ENCODE measurements at regions of chr17 and their contacts with region 1.

Region 1: GRCh38 chr17:17859909-17860765 is 23.4 kb upstream of the SREBF1 start:
- DNase-seq: peak; percentile 75
- ATAC-seq: peak; percentile 93
- H3K4me3 Mint-ChIP-seq: no peak overlapping the region
- H3K27ac Mint-ChIP-seq: no peak overlapping the region
- H3K4me1 Mint-ChIP-seq: peaks cover 11% of the 10 kb centered on the region
- H3K27me3 Mint-ChIP-seq: no peaks in the 10 kb centered on the region
- CTCF ChIP-seq: peak; percentile 94

Region 2: DNA sequence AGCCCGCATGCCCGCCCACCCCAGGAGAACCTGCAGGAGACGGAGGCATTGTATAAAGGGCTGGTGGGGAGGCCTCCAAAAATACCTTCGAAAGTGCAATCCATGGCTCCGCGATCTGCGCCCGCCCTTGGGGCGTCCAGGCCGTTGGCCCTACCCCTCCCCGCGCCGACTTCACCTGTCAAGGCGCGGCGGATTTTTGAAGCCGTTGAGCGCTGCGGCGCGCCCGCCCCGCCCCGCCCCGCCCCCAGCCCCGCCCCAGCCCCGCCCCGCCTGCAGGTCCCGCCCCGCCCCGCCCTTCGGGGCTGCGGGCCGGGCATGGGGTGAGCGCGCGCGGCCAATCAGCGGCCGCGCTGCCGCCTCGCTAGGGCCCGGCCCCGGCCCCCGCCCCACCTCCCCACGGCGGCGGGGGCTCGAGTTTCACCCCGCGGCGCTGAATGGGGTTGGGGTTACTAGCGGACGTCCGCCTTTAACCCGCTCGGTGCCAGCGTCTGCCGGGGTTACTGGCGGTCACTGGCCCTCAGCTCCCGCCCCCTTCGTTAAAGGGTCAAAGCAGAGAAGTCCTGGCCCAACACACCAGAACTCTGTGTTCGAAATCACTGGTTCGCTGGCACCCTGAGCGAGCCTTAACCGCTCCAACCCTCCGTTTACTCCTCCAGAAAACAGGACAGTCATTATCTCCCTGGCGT is 36.6 kb before region 1 on chr17:
- CTCF ChIA-PET with region 1: interaction called, 12 read pairs
- POLR2A ChIA-PET with region 1: interaction called, 3 read pairs
- DNase-seq: peak; percentile 96
- ATAC-seq: peak; percentile 87
- H3K4me3 Mint-ChIP-seq: peak overlapping the region; percentile 52
- H3K27ac Mint-ChIP-seq: peak overlapping the region; percentile 99
- H3K4me1 Mint-ChIP-seq: peaks cover 77% of the 10 kb centered on the region
- H3K27me3 Mint-ChIP-seq: no peaks in the 10 kb centered on the region
- CTCF ChIP-seq: no peak

Region 3: GRCh38 chr17:17836250-17836817 is 23.8 kb before region 1 on chr17:
- CTCF ChIA-PET with region 1: interaction called, 37 read pairs
- POLR2A ChIA-PET with region 1: interaction called, 16 read pairs
- DNase-seq: peak; percentile 98
- ATAC-seq: peak; percentile 53
- H3K4me3 Mint-ChIP-seq: peak overlapping the region; percentile 69
- H3K27ac Mint-ChIP-seq: peak overlapping the region; percentile 94
- H3K4me1 Mint-ChIP-seq: peaks cover 70% of the 10 kb centered on the region
- H3K27me3 Mint-ChIP-seq: no peaks in the 10 kb centered on the region
- CTCF ChIP-seq: no peak

Region 4: DNA sequence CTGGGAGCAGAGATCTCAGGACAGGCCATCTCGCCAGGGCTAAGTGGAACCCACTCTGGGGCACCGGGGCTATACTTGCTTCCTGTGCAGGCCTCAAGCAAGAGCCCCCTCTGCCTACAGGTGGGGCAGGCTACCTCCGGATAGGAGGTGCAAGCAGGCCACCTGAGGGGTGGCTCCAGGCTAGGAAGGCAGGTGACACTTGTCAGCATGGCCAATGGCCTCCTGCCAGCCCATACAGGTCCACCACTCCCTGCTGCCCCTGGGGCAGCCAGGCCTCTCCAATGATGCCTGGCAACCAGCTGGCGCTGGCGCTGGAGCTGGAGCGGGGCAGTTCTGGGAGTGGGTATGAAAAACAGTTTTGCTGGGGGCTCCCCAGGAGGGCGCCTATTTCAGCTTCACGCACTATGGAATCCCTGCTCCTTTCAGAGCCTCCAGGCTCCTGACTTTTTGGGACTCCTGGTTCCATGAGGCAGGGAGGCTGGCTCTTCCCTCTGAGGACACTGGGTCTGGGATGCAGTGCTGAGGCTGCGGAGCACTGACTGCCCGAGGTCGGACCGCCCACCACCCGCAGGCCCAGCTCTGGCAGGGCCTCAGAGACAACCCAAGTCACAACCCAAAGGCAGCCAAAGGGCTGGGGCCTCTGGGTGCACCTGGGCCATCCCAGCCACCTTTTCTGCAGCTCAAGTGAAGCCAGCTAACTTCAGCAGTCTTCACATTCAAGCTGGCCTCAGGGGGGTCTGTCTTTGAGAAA is 14.9 kb before region 1 on chr17:
- CTCF ChIA-PET with region 1: interaction called, 23 read pairs
- POLR2A ChIA-PET with region 1: interaction called, 3 read pairs
- DNase-seq: no peak
- ATAC-seq: no peak
- H3K4me3 Mint-ChIP-seq: no peak overlapping the region
- H3K27ac Mint-ChIP-seq: no peak overlapping the region
- H3K4me1 Mint-ChIP-seq: peaks cover 47% of the 10 kb centered on the region
- H3K27me3 Mint-ChIP-seq: peaks cover 3% of the 10 kb centered on the region; the same call in 1 of the 2 replicates
- CTCF ChIP-seq: no peak

Region 5: GRCh38 chr17:17884391-17885357 is 24.5 kb after region 1 on chr17:
- CTCF ChIA-PET with region 1: interaction called, 12 read pairs
- POLR2A ChIA-PET with region 1: no interaction called
- DNase-seq: peak; percentile 47
- ATAC-seq: no peak
- H3K4me3 Mint-ChIP-seq: no peak overlapping the region
- H3K27ac Mint-ChIP-seq: peak overlapping the region; percentile 61
- H3K4me1 Mint-ChIP-seq: peaks cover 62% of the 10 kb centered on the region
- H3K27me3 Mint-ChIP-seq: no peaks in the 10 kb centered on the region; the same call in 1 of the 2 replicates
- CTCF ChIP-seq: no peak

Region 6: DNA sequence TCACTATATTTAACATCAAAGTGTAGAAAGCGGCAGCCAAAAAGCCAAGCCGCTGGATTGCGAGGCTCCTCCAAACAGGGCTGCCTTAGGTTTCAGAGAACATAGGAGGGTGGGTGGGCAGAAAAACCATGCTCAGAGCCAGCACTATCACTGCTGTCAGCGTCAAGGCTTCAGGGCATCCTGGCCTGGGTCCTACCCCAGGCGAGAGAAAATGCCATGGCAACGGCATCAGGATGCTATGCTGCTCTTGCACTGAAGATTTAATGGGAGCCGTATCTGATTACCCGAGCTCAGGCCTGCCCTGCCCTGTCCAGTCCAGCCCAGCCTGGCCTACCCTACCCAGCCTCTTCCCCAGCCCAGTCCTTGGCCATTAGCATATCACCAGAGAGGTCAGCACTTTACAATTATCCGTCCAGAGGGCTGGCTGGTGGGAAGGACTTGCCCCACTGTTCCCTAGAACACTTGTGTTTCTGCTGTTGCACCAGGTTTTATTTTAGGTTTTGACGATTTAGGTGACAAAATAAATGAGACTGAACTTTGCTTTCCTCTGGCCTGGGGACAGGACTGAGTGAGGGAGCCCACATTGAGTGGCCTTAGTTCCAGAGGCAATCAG is 51.0 kb after region 1 on chr17:
- CTCF ChIA-PET with region 1: no interaction called
- POLR2A ChIA-PET with region 1: no interaction called
- DNase-seq: no peak
- ATAC-seq: no peak
- H3K4me3 Mint-ChIP-seq: no peak overlapping the region
- H3K27ac Mint-ChIP-seq: no peak overlapping the region
- H3K4me1 Mint-ChIP-seq: peaks cover 27% of the 10 kb centered on the region
- H3K27me3 Mint-ChIP-seq: peaks cover 3% of the 10 kb centered on the region; the same call in 1 of the 2 replicates
- CTCF ChIP-seq: no peak

Region 7: GRCh38 chr17:18056212-18056611 is 196.1 kb after region 1 on chr17:
- CTCF ChIA-PET with region 1: no interaction called
- POLR2A ChIA-PET with region 1: no interaction called
- DNase-seq: no peak
- ATAC-seq: no peak
- H3K4me3 Mint-ChIP-seq: no peak overlapping the region
- H3K27ac Mint-ChIP-seq: no peak overlapping the region
- H3K4me1 Mint-ChIP-seq: no peaks in the 10 kb centered on the region
- H3K27me3 Mint-ChIP-seq: no peaks in the 10 kb centered on the region
- CTCF ChIP-seq: no peak